ENCODE measurements at regions of chr7 and their contacts with region 1.

Region 1: GRCh38 chr7:91264046-91264923 is at the start of gene FZD1:
- DNase-seq: peak; percentile 66
- ATAC-seq: peak; percentile 93
- H3K4me3 ChIP-seq: peak within 1 kb of the TSS; percentile 82
- H3K27ac ChIP-seq: no peak within 1 kb of the TSS
- H3K4me1 ChIP-seq: peaks cover 6% of the 10 kb centered on the region; the same call in 1 of the 2 replicates
- H3K27me3 ChIP-seq: peaks cover 6 to 8% of the 10 kb centered on the region in 2 experiments
- CTCF ChIP-seq: no peak
- EP300 ChIP-seq: no peak
- POLR2A ChIP-seq: peak; percentile 33; the same call in 1 of the 2 replicates
- RAD21 ChIP-seq: no peak
- polyA plus RNA-seq, gene FZD1: 0.07 to 0.10 TPM

Region 2: GRCh38 chr7:90690159-90690858 is 574.0 kb before region 1 on chr7:
- CTCF ChIA-PET with region 1: no interaction called
- POLR2A ChIA-PET with region 1: no interaction called
- RAD21 ChIA-PET with region 1: no interaction called
- SMC1A ChIA-PET with region 1: no interaction called
- in situ Hi-C with region 1: loop called (anchors 25 kb)
- intact Hi-C with region 1: no loop called
- DNase-seq: no peak
- ATAC-seq: peak; percentile 69
- H3K4me3 ChIP-seq: no peak overlapping the region
- H3K27ac ChIP-seq: no peak overlapping the region
- H3K4me1 ChIP-seq: peaks cover 4% of the 10 kb centered on the region; the same call in 1 of the 2 replicates
- H3K27me3 ChIP-seq: no peaks in the 10 kb centered on the region
- CTCF ChIP-seq: peak in 2 of 3 experiments; percentile 10 to 18; a peak in 2 of 6 replicates
- EP300 ChIP-seq: no peak
- POLR2A ChIP-seq: no peak
- RAD21 ChIP-seq: peak; percentile 73

Measured in GM12878 (cell line).